IMR-90 (cell line): ENCODE measurements at regions of chr14 and their contacts with region 1.

Region 1: GRCh38 chr14:24160850-24161804 is at the start of gene IRF9:
- DNase-seq: peak; percentile 91
- ATAC-seq: peak; percentile 95
- H3K4me3 ChIP-seq: peak within 1 kb of the TSS; percentile 57
- H3K27ac ChIP-seq: peak within 1 kb of the TSS; percentile 78
- H3K4me1 ChIP-seq: peaks cover 7% of the 10 kb centered on the region
- H3K27me3 ChIP-seq: no peaks in the 10 kb centered on the region
- CTCF ChIP-seq: peak; percentile 97
- POLR2A ChIP-seq: peak; percentile 54; the same call in 1 of the 2 replicates
- RAD21 ChIP-seq: peak; percentile 72
- total RNA-seq, gene IRF9: 29.7 and 34.6 TPM in 2 replicates

Region 2: GRCh38 chr14:24058260-24058950 is 102.7 kb before region 1 on chr14:
- CTCF ChIA-PET with region 1: no interaction called
- POLR2A ChIA-PET with region 1: no interaction called
- dilution Hi-C with region 1: no loop called
- in situ Hi-C with region 1: no loop called
- intact Hi-C with region 1: loop called (anchors 1 kb)
- DNase-seq: peak; percentile 64
- ATAC-seq: peak; percentile 98
- H3K4me3 ChIP-seq: no peak overlapping the region
- H3K27ac ChIP-seq: no peak overlapping the region
- H3K4me1 ChIP-seq: no peaks in the 10 kb centered on the region
- H3K27me3 ChIP-seq: peaks cover 34% of the 10 kb centered on the region; the same call in 1 of the 2 replicates
- CTCF ChIP-seq: peak; percentile 93
- POLR2A ChIP-seq: no peak
- RAD21 ChIP-seq: peak; percentile 94

Region 3: DNA sequence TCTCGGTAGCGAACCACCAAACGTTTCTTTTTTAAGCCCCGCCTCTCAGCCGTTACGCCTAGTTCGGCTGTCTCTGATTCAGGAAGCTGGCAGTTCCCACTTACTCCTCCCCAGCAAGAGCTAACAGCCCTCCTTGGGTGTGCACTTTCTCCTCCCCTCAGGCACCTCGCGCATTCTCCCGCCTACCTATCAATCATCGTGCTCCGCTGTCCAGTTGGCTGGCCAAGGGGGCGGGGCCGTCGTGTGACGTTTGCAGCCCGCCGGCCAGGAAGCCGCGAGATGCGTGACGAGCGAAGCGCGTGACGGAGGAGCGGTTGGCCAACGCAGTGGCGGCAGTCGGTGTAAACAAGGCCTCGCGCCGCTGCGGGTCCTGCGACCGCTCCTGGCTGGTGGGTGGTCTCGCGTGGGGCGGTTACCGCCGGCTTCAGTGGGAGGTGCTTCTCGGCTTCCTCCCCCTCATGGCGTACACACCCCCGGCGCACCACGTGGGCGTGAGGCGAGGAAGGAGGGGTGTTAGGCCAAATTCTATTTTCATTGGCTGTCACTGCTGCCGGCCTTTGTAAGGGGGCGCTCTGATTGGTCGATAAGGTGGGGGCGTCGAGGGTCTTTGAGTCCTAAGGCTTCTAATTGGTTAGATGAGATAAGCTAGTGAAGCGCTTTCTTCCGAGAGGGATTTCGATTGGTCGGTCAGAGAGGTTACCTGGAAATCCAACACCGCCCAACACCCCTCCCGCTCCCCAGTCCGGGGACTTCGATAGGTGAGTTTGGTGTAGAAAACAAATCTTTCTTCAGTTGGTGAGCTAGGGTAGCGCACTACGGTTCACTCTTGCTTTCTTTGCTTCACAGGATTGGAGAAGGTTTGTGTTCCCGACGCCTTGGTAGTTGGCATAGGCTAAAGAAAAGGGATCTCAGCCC is 46.3 kb before region 1 on chr14 and contains the starts of genes DCAF11 and NRL:
- CTCF ChIA-PET with region 1: interaction called, 4 read pairs
- POLR2A ChIA-PET with region 1: no interaction called
- dilution Hi-C with region 1: no loop called
- in situ Hi-C with region 1: no loop called
- intact Hi-C with region 1: loop called (anchors 1 kb)
- DNase-seq: peak; percentile 100
- ATAC-seq: peak; percentile 90
- H3K4me3 ChIP-seq: peak within 1 kb of the TSS; percentile 74
- H3K27ac ChIP-seq: peak within 1 kb of the TSS; percentile 91
- H3K4me1 ChIP-seq: peaks cover 3% of the 10 kb centered on the region; the same call in 1 of the 2 replicates
- H3K27me3 ChIP-seq: no peaks in the 10 kb centered on the region
- CTCF ChIP-seq: no peak
- POLR2A ChIP-seq: peak; percentile 30; the same call in 1 of the 2 replicates
- RAD21 ChIP-seq: no peak
- total RNA-seq, gene DCAF11: 46.7 and 52.0 TPM in 2 replicates
- total RNA-seq, gene NRL: 0.18 and 0.28 TPM in 2 replicates

Region 4: DNA sequence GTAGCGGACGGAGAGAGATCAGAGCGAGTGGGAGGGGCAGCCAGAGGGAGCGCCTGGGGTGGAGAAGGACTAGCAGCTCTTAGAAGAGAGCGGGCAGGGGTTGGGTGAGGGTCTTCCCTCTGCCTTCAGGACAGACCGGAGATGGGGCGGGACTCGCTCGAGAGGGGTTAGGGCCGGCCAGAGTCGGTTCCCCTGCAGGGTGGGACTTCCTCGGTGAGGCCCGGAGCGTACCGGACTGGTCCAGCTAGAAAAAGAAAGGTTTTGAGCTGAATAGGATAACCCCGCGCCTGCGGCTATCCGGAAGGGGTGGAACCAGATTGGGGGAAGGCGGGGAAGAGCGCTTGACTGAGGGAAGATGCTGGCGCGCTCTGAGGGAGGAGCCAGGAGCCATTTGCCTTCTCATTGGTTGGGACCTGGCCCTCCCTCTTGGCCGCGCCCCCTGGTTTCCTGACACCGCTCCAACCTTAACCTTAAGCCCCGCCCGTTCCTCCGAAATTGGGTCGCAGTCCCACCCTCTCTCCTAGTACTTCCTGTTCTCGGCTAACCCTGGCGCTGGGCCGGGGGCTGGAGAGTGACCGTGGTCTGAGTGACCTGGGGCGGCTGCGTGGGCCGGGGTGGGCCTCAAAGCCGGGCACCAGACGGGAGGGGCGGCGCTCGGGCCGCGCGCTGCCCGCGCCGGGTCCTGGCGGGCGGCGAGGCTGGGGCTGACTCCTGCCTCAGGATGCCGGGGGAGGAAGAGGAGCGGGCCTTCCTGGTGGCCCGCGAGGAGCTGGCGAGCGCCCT is 14.0 kb before region 1 on chr14 and contains the start of gene RNF31:
- CTCF ChIA-PET with region 1: interaction called, 14 read pairs
- POLR2A ChIA-PET with region 1: interaction called, 3 read pairs
- dilution Hi-C with region 1: no loop called
- in situ Hi-C with region 1: no loop called
- intact Hi-C with region 1: no loop called
- DNase-seq: peak; percentile 98
- ATAC-seq: peak; percentile 91
- H3K4me3 ChIP-seq: peak within 1 kb of the TSS; percentile 86
- H3K27ac ChIP-seq: peak within 1 kb of the TSS; percentile 79
- H3K4me1 ChIP-seq: peaks cover 9% of the 10 kb centered on the region
- H3K27me3 ChIP-seq: no peaks in the 10 kb centered on the region
- CTCF ChIP-seq: no peak
- POLR2A ChIP-seq: no peak
- RAD21 ChIP-seq: no peak
- total RNA-seq, gene RNF31: 26.1 and 37.5 TPM in 2 replicates

Region 5: GRCh38 chr14:24465368-24465767 is 304.2 kb after region 1 on chr14:
- CTCF ChIA-PET with region 1: no interaction called
- POLR2A ChIA-PET with region 1: no interaction called
- dilution Hi-C with region 1: no loop called
- in situ Hi-C with region 1: no loop called
- intact Hi-C with region 1: no loop called
- DNase-seq: no peak
- ATAC-seq: no peak
- H3K4me3 ChIP-seq: no peak overlapping the region
- H3K27ac ChIP-seq: no peak overlapping the region
- H3K4me1 ChIP-seq: no peaks in the 10 kb centered on the region
- H3K27me3 ChIP-seq: no peaks in the 10 kb centered on the region
- CTCF ChIP-seq: no peak
- POLR2A ChIP-seq: no peak
- RAD21 ChIP-seq: no peak